Activated B cell treated with CpG ODN at 0.5 μM for 24 hours (primary cell): ENCODE measurements at regions of chr1 and their contacts with region 1.

Region 1: DNA sequence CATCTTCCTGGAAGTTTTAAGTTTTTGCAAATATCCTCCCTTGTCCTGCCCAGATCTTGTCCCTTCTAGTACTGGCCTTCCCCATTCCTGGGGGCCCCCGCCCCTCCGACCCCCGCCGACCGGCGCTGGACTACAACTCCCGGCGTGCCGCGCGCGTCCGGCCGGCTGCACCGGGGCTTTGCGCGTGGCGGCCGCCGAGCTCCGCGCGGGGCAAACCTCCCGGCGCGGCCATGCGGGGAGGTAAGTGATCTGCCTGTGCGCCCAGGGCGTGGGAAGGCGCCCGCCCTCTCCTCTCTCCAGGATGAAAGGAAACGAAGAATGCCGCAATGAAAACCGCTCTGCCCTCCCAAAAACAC is 3.2 kb upstream of the SAMD13 start:
- DNase-seq: peak; percentile 58
- ATAC-seq: peak; percentile 91
- H3K4me3 Mint-ChIP-seq: peak overlapping the region; percentile 90
- H3K27ac Mint-ChIP-seq: peak overlapping the region; percentile 74
- H3K4me1 Mint-ChIP-seq: peaks cover 34% of the 10 kb centered on the region
- H3K27me3 Mint-ChIP-seq: peaks cover 8% of the 10 kb centered on the region
- CTCF ChIP-seq: no peak

Region 2: GRCh38 chr1:84156210-84156621 is 142.1 kb before region 1 on chr1:
- CTCF ChIA-PET with region 1: no interaction called
- POLR2A ChIA-PET with region 1: interaction called, 8 read pairs
- intact Hi-C with region 1: loop called (anchors 5 kb)
- DNase-seq: no peak
- ATAC-seq: peak; percentile 76
- H3K4me3 Mint-ChIP-seq: no peak overlapping the region
- H3K27ac Mint-ChIP-seq: peak overlapping the region; percentile 15
- H3K4me1 Mint-ChIP-seq: peaks cover 83% of the 10 kb centered on the region
- H3K27me3 Mint-ChIP-seq: no peaks in the 10 kb centered on the region
- CTCF ChIP-seq: no peak

Region 3: GRCh38 chr1:84253891-84254290 is 44.4 kb before region 1 on chr1:
- CTCF ChIA-PET with region 1: no interaction called
- POLR2A ChIA-PET with region 1: no interaction called
- intact Hi-C with region 1: no loop called
- DNase-seq: no peak
- ATAC-seq: no peak
- H3K4me3 Mint-ChIP-seq: no peak overlapping the region
- H3K27ac Mint-ChIP-seq: no peak overlapping the region
- H3K4me1 Mint-ChIP-seq: no peaks in the 10 kb centered on the region
- H3K27me3 Mint-ChIP-seq: no peaks in the 10 kb centered on the region
- CTCF ChIP-seq: no peak

Region 4: DNA sequence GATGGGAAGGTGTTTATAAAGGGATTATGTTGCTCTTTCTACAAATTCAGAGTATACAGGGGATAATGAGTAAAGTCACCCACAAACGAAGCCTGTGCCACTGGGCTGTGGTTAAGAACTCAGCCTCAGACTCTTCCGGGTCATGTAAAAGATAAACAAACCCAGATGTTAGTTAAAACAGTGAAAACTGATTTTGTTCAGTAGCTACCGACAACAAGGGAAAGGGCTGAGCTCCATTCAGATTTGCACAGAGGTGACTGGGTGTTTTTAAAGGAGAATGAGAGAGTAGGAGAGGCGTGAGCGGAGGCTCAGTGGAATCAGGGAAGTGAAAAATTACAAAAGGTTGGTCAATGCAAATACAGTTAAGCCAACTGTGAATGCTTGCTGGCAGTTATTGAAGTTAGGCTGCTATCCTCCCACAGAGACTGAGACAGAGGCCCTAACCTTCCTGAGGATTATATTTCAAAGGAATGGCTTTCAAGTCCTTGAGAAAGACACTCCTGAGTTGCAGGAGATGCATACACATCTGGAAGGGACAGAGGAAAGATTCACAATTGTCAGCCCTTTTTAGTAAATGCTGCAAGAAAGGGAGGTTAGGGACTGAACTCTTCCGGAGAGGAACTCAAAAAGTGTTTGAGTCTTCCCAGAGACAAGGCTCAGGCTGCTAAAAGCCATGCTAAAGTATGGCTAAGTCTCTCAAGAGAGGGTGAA is 26.7 kb before region 1 on chr1:
- CTCF ChIA-PET with region 1: no interaction called
- POLR2A ChIA-PET with region 1: no interaction called
- intact Hi-C with region 1: loop called (anchors 1 kb)
- DNase-seq: no peak
- ATAC-seq: peak; percentile 95
- H3K4me3 Mint-ChIP-seq: peak overlapping the region; percentile 60
- H3K27ac Mint-ChIP-seq: peak overlapping the region; percentile 85
- H3K4me1 Mint-ChIP-seq: peaks cover 25% of the 10 kb centered on the region
- H3K27me3 Mint-ChIP-seq: no peaks in the 10 kb centered on the region
- CTCF ChIP-seq: no peak

Region 5: GRCh38 chr1:84282780-84283333 is 15.4 kb before region 1 on chr1:
- CTCF ChIA-PET with region 1: no interaction called
- POLR2A ChIA-PET with region 1: no interaction called
- intact Hi-C with region 1: no loop called
- DNase-seq: no peak
- ATAC-seq: no peak
- H3K4me3 Mint-ChIP-seq: no peak overlapping the region
- H3K27ac Mint-ChIP-seq: no peak overlapping the region
- H3K4me1 Mint-ChIP-seq: no peaks in the 10 kb centered on the region
- H3K27me3 Mint-ChIP-seq: peaks cover 7% of the 10 kb centered on the region
- CTCF ChIP-seq: no peak

Region 6: GRCh38 chr1:84377480-84378095 is 79.3 kb after region 1 on chr1:
- CTCF ChIA-PET with region 1: no interaction called
- POLR2A ChIA-PET with region 1: no interaction called
- intact Hi-C with region 1: no loop called
- DNase-seq: no peak
- ATAC-seq: no peak
- H3K4me3 Mint-ChIP-seq: no peak overlapping the region
- H3K27ac Mint-ChIP-seq: no peak overlapping the region
- H3K4me1 Mint-ChIP-seq: no peaks in the 10 kb centered on the region
- H3K27me3 Mint-ChIP-seq: peaks cover 6% of the 10 kb centered on the region
- CTCF ChIP-seq: no peak

Region 7: GRCh38 chr1:84387480-84388163 is 89.3 kb after region 1 on chr1:
- CTCF ChIA-PET with region 1: no interaction called
- POLR2A ChIA-PET with region 1: no interaction called
- intact Hi-C with region 1: loop called (anchors 5 kb)
- DNase-seq: no peak
- ATAC-seq: no peak
- H3K4me3 Mint-ChIP-seq: no peak overlapping the region
- H3K27ac Mint-ChIP-seq: no peak overlapping the region
- H3K4me1 Mint-ChIP-seq: peaks cover 4% of the 10 kb centered on the region
- H3K27me3 Mint-ChIP-seq: peaks cover 5% of the 10 kb centered on the region
- CTCF ChIP-seq: no peak

Region 8: DNA sequence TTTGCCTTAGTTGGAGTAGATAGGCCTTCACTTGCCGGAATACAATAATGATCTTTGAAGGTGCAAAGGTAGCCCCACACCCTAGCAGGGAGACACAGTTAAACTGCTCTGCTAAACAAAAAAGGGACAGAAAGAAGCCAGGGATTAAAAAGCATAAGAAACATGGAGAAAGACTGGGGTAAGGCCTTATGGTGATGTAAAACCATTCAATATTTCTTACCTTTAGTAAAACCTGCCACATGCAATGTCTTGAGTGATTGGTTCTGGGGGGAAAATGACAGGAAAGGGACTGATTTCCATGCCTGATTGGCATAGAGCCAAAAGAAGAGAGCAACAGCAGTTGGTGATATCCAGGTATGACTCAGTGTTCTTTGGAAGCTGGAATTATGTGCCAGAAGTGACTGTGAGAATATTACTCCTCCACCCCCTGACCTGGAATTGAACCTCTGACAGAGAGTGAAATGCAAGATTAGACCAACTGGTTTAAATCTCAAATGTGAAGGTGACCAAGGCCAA is 108.1 kb after region 1 on chr1:
- CTCF ChIA-PET with region 1: no interaction called
- POLR2A ChIA-PET with region 1: no interaction called
- intact Hi-C with region 1: no loop called
- DNase-seq: no peak
- ATAC-seq: no peak
- H3K4me3 Mint-ChIP-seq: no peak overlapping the region
- H3K27ac Mint-ChIP-seq: no peak overlapping the region
- H3K4me1 Mint-ChIP-seq: no peaks in the 10 kb centered on the region
- H3K27me3 Mint-ChIP-seq: no peaks in the 10 kb centered on the region
- CTCF ChIP-seq: no peak

Region 9: GRCh38 chr1:84433258-84434080 is 135.2 kb after region 1 on chr1:
- CTCF ChIA-PET with region 1: interaction called, 4 read pairs
- POLR2A ChIA-PET with region 1: interaction called, 5 read pairs
- intact Hi-C with region 1: loop called (anchors 2 kb)
- DNase-seq: no peak
- ATAC-seq: peak; percentile 59
- H3K4me3 Mint-ChIP-seq: peak overlapping the region; percentile 65
- H3K27ac Mint-ChIP-seq: peak overlapping the region; percentile 15
- H3K4me1 Mint-ChIP-seq: peaks cover 9% of the 10 kb centered on the region
- H3K27me3 Mint-ChIP-seq: no peaks in the 10 kb centered on the region
- CTCF ChIP-seq: peak; percentile 48

Region 10: DNA sequence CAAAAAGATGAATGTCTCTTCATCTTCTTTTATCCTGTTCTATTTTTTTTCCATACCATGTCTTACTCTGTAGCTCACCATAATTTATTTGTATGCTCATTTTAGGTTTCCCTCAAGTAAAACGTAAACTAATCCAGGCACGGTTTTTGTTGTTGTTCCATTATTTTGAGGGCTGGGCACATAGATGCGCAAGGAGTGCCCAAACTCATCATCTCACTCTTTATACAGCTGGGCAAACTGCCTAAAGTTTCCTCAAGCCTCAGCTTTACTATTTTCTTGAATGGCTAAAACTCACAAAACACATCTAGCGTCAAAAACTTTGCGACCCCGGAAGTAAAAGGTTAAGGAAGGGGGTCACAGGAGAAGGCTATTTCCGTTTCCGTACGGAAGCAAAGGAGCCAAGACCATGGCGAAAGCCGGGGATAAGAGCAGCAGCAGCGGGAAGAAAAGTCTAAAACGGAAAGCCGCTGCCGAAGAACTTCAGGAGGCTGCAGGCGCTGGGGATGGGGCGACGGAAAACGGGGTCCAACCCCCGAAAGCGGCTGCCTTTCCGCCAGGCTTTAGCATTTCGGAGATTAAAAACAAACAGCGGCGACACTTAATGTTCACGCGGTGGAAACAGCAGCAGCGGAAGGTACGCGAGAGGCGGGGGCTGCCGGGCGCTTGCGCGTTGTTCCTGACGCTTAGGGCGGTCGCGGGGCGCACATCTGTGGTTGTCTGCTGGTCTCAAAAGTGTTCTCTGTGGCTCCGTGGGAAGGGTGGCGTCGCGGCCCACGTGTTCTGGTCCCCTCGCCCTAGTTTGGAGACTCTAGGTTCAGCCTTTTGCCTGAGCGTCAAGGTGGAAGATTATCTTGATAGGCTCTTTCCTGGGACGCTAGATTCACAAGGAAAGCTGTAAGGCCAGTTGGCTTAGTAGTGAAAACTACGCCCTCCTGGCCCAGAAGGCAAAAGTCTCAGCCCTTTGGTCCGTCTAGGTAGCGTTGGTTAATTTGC is 180.9 kb after region 1 on chr1 and contains the start of gene RPF1:
- CTCF ChIA-PET with region 1: no interaction called
- POLR2A ChIA-PET with region 1: no interaction called
- intact Hi-C with region 1: loop called (anchors 1 kb)
- DNase-seq: peak; percentile 64
- ATAC-seq: peak; percentile 96
- H3K4me3 Mint-ChIP-seq: peak within 1 kb of the TSS; percentile 97
- H3K27ac Mint-ChIP-seq: peak within 1 kb of the TSS; percentile 97
- H3K4me1 Mint-ChIP-seq: peaks cover 37% of the 10 kb centered on the region
- H3K27me3 Mint-ChIP-seq: peaks cover 21% of the 10 kb centered on the region
- CTCF ChIP-seq: no peak
- total RNA-seq, gene RPF1: 42.8 and 46.3 TPM in 2 replicates

Region 11: DNA sequence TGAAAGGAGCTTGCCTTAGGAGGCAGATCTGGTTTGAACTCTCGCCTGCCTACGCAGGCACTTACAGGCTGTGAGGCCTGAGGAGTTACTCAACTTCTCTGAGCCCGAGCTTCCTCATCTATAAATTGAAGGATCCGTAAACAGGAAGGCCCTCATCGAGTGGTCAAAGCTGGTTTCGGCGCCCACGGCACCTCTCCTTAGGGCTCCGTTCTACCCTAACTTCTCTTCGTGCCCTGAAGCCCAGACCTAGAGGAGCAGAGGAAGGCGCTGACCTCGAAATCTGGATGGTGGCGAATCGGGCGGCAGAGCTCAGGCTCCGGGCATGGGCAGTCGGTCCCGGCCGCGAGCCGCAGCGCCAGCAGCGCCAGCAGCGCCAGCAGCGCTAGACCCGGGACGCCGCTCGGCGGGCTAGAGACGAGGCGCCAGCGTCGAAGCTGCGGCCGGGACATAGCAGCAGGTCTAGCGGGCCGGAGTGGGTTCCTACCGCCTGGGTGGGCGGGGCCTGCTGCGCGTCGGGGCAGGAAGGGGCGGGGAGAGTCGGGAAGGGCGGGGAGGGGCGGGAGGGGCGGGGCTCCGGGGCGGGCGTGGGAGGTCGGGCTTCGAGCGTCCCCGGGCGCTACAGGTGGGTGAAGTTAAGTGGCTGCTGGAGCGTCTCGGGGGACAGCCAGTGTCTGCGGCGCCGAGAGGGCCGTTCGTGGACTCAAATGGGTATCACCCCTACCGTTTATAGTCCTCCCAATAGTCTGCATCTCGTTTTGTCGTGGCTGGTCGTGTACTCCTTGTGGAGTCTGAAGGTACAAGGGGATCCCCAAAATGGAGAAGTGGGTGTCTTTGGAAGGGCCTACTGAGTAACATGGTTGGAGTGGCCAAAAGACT is 275.9 kb after region 1 on chr1 and contains the start of gene CTBS:
- CTCF ChIA-PET with region 1: no interaction called
- POLR2A ChIA-PET with region 1: no interaction called
- intact Hi-C with region 1: loop called (anchors 5 kb)
- DNase-seq: peak; percentile 81
- ATAC-seq: peak; percentile 91
- H3K4me3 Mint-ChIP-seq: peak within 1 kb of the TSS; percentile 96
- H3K27ac Mint-ChIP-seq: peak within 1 kb of the TSS; percentile 99
- H3K4me1 Mint-ChIP-seq: peaks cover 40% of the 10 kb centered on the region
- H3K27me3 Mint-ChIP-seq: no peaks in the 10 kb centered on the region
- CTCF ChIP-seq: no peak
- total RNA-seq, gene CTBS: 11.8 and 13.2 TPM in 2 replicates